CD14-positive monocyte (primary cell): ENCODE measurements at regions of chr2 and their contacts with region 1.

Region 1: GRCh38 chr2:151437630-151438029 is 27.9 kb downstream of the RIF1 start:
- DNase-seq: peak; percentile 10 to 41 (median 24)
- H3K4me3 ChIP-seq: no peak overlapping the region
- H3K4me3 Mint-ChIP-seq: no peak overlapping the region
- H3K27ac ChIP-seq: peak overlapping the region in 1 of 2 donors; percentile 14
- H3K27ac Mint-ChIP-seq: peak overlapping the region in 2 of 7 donors; percentile 22 to 26
- H3K4me1 ChIP-seq: no peaks in the 10 kb centered on the region
- H3K4me1 Mint-ChIP-seq: no peaks in the 10 kb centered on the region
- H3K27me3 ChIP-seq: no peaks in the 10 kb centered on the region
- H3K27me3 Mint-ChIP-seq: peaks cover 0 to 2% (median 0%) of the 10 kb centered on the region in 3 donors
- CTCF ChIP-seq: peak; percentile 87

Region 2: DNA sequence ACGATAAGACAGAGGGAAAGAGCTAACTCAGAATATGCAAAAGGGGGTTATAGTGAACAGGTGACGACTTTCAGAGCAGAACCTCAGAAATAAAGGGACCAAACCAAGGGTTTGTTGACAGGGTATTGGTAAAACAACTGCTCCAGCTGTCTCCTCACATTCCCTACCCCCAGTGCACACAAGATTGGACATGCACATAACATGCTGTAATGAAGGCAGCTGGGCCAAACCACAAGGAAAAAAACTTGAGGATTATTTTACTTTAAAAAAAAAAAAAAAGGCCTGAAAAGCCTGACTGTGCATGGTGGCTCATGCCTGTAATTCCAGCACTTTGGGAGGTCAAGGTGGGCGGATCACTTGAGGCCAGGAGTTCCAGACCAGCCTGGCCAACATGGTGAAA is 179.5 kb before region 1 on chr2:
- intact Hi-C with region 1: no loop called
- DNase-seq: no peak
- H3K4me3 ChIP-seq: no peak overlapping the region
- H3K4me3 Mint-ChIP-seq: no peak overlapping the region
- H3K27ac ChIP-seq: no peak overlapping the region
- H3K27ac Mint-ChIP-seq: no peak overlapping the region
- H3K4me1 ChIP-seq: peaks cover 9 to 10% of the 10 kb centered on the region in 2 donors
- H3K4me1 Mint-ChIP-seq: peaks cover 21% of the 10 kb centered on the region
- H3K27me3 ChIP-seq: no peaks in the 10 kb centered on the region
- H3K27me3 Mint-ChIP-seq: peaks cover 0 to 3% (median under 1%) of the 10 kb centered on the region in 3 donors
- CTCF ChIP-seq: no peak

Region 3: GRCh38 chr2:151269798-151270568 is 167.6 kb before region 1 on chr2:
- intact Hi-C with region 1: loop called in 1 of 2 experiments (anchors 10 kb)
- DNase-seq: no peak
- H3K4me3 ChIP-seq: no peak overlapping the region
- H3K4me3 Mint-ChIP-seq: no peak overlapping the region
- H3K27ac ChIP-seq: no peak overlapping the region
- H3K27ac Mint-ChIP-seq: no peak overlapping the region
- H3K4me1 ChIP-seq: no peaks in the 10 kb centered on the region
- H3K4me1 Mint-ChIP-seq: no peaks in the 10 kb centered on the region
- H3K27me3 ChIP-seq: no peaks in the 10 kb centered on the region
- H3K27me3 Mint-ChIP-seq: peaks cover 0 to 1% (median 0%) of the 10 kb centered on the region in 3 donors
- CTCF ChIP-seq: no peak

Region 4: GRCh38 chr2:151481744-151482143 is 44.1 kb after region 1 on chr2:
- intact Hi-C with region 1: no loop called
- DNase-seq: no peak
- H3K4me3 ChIP-seq: no peak overlapping the region
- H3K4me3 Mint-ChIP-seq: no peak overlapping the region
- H3K27ac ChIP-seq: peak overlapping the region in 1 of 2 donors; percentile 26
- H3K27ac Mint-ChIP-seq: no peak overlapping the region
- H3K4me1 ChIP-seq: no peaks in the 10 kb centered on the region
- H3K4me1 Mint-ChIP-seq: peaks cover 2% of the 10 kb centered on the region
- H3K27me3 ChIP-seq: no peaks in the 10 kb centered on the region
- H3K27me3 Mint-ChIP-seq: no peaks in the 10 kb centered on the region
- CTCF ChIP-seq: no peak

Region 5: DNA sequence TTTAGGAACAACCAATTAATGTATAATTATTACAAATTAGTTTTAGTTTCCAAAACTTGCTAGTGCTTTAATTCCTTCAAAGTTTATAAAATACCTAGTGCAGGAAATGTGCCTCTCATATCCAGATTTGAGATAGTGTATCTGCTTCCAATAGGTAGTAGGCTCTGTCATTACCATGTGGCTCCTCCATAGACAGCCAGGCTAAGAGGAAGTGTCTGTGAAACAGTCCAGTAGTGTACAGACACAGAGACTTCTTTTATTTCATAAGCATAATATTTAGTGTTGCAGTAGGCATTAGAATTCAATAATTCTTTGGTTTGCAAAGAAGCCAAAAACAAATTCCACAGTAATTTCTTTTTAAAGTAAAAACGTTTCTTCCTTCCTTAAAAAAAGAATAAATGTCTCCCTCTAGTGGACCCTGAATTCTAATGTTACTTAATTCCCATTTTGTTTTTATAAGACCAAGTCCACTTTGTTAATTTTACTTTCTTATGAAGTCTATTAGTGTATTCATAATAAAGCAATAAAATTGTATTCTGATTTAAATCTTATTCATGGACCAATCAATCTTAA is 195.4 kb after region 1 on chr2:
- intact Hi-C with region 1: no loop called
- DNase-seq: peak in 1 of 3 donors; percentile 2
- H3K4me3 ChIP-seq: no peak overlapping the region
- H3K4me3 Mint-ChIP-seq: no peak overlapping the region
- H3K27ac ChIP-seq: no peak overlapping the region
- H3K27ac Mint-ChIP-seq: no peak overlapping the region
- H3K4me1 ChIP-seq: peaks cover 14% of the 10 kb centered on the region in 2 donors
- H3K4me1 Mint-ChIP-seq: peaks cover 13% of the 10 kb centered on the region
- H3K27me3 ChIP-seq: no peaks in the 10 kb centered on the region
- H3K27me3 Mint-ChIP-seq: peaks cover 0 to 2% (median 0%) of the 10 kb centered on the region in 3 donors
- CTCF ChIP-seq: peak; percentile 48